Lower leg skin (tissue), 4 donors: ENCODE measurements at regions of chr1 and their contacts with region 1.

Region 1: GRCh38 chr1:30719406-30720270 is 3.7 kb downstream of the MATN1 start:
- DNase-seq: no peak
- H3K4me3 ChIP-seq: no peak overlapping the region
- CTCF ChIP-seq: peak in 1 of 3 donors; percentile 4
- POLR2A ChIP-seq: no peak

Region 2: GRCh38 chr1:30562559-30562958 is 157.1 kb before region 1 on chr1:
- intact Hi-C with region 1: no loop called
- DNase-seq: no peak
- H3K4me3 ChIP-seq: no peak overlapping the region
- CTCF ChIP-seq: no peak
- POLR2A ChIP-seq: no peak

Region 3: DNA sequence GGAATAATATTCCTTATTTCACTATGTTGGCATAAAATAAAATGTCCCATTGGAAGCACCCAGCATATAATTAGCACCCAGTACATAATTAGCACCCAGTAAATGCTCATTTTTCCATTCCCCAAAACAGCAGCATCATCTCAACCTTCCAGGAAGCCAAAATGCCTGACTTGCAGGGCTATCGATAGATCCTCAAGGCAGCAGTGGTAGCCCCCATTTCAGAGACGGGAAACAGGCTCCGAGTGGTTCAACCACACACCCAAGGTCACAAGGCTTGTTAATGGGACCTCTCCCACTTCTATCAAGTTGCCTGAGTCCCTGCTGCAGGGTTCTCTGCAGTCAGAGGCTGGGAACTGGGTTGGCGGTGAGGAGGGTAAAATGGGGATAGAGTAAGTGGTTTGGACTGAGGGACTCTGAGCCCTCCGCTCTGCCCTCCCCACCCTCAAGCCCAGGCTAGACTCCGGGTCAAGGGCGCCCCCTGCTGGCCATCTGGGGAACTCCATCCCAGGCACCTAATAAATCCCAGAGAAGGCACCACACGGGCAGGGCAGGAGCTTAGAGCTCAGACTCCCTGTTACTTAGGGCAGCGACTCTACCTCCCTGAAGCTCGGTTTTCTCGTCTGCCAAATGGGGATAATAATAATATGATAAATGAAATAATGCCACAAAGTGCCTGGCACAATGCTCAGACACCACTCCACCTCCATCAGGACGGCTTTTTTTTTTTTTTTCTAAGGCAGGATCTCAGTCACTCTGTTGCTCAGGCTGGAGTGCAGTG is 59.8 kb after region 1 on chr1:
- intact Hi-C with region 1: loop called (anchors 2 kb)
- DNase-seq: peak; percentile 80 to 97
- H3K4me3 ChIP-seq: no peak overlapping the region
- CTCF ChIP-seq: peak in 2 of 3 donors; percentile 34 to 92
- POLR2A ChIP-seq: no peak

Region 4: GRCh38 chr1:31335007-31335406 is 615.4 kb after region 1 on chr1:
- intact Hi-C with region 1: no loop called
- DNase-seq: no peak
- H3K4me3 ChIP-seq: no peak overlapping the region
- CTCF ChIP-seq: no peak
- POLR2A ChIP-seq: no peak